Gastrocnemius medialis (tissue), 4 donors: ENCODE measurements at regions of chrX and their contacts with region 1.

Region 1: GRCh38 chrX:12370497-12370986 is 232.3 kb downstream of the FRMPD4 start:
- DNase-seq: no peak
- ATAC-seq: no peak
- H3K4me3 ChIP-seq: no peak overlapping the region
- H3K27ac ChIP-seq: no peak overlapping the region
- H3K4me1 ChIP-seq: no peaks in the 10 kb centered on the region
- H3K27me3 ChIP-seq: no peaks in the 10 kb centered on the region
- CTCF ChIP-seq: no peak
- POLR2A ChIP-seq: no peak

Region 2: DNA sequence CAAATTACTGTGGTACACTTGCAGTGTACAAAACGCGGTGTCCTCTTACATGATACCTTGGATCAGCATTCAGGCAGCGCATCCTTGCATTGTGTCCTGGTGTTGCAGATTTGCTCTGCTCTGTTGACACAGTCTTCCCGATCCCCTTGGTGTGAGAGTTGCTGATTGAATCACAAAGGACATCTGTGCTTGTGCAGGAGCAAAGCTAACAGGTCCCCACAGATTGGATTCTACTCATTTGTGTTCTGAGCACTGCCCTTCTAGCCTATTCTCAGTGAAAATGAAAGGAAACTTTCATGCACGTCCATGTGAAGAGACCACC is 60.8 kb before region 1 on chrX:
- in situ Hi-C with region 1: no loop called
- intact Hi-C with region 1: loop called (anchors 2 kb)
- DNase-seq: no peak
- ATAC-seq: no peak
- H3K4me3 ChIP-seq: no peak overlapping the region
- H3K27ac ChIP-seq: no peak overlapping the region
- H3K4me1 ChIP-seq: no peaks in the 10 kb centered on the region
- H3K27me3 ChIP-seq: no peaks in the 10 kb centered on the region
- CTCF ChIP-seq: no peak
- POLR2A ChIP-seq: no peak